Calu3 (cell line): ENCODE measurements at regions of chr17 and their contacts with region 1.

Region 1: GRCh38 chr17:64129764-64130558 is at the start of gene ERN1:
- DNase-seq: peak; percentile 88
- H3K4me3 Mint-ChIP-seq: peak within 1 kb of the TSS; percentile 82
- H3K27ac Mint-ChIP-seq: peak within 1 kb of the TSS; percentile 42
- H3K4me1 Mint-ChIP-seq: no peaks in the 10 kb centered on the region
- H3K27me3 Mint-ChIP-seq: no peaks in the 10 kb centered on the region
- CTCF ChIP-seq: no peak
- total RNA-seq, gene ERN1: 16.5 and 17.3 TPM in 2 replicates

Region 2: GRCh38 chr17:63919311-63919723 is 210.6 kb before region 1 on chr17:
- CTCF ChIA-PET with region 1: interaction called, 15 read pairs
- intact Hi-C with region 1: loop called (anchors 10 kb)
- DNase-seq: peak; percentile 58
- H3K4me3 Mint-ChIP-seq: no peak overlapping the region
- H3K27ac Mint-ChIP-seq: no peak overlapping the region
- H3K4me1 Mint-ChIP-seq: no peaks in the 10 kb centered on the region
- H3K27me3 Mint-ChIP-seq: peaks cover 72% of the 10 kb centered on the region
- CTCF ChIP-seq: peak; percentile 90

Region 3: GRCh38 chr17:64025732-64026294 is 104.1 kb before region 1 on chr17:
- CTCF ChIA-PET with region 1: interaction called, 78 read pairs
- intact Hi-C with region 1: loop called (anchors 1 kb)
- DNase-seq: peak; percentile 85
- H3K4me3 Mint-ChIP-seq: peak overlapping the region; percentile 74
- H3K27ac Mint-ChIP-seq: peak overlapping the region; percentile 19
- H3K4me1 Mint-ChIP-seq: peaks cover 8% of the 10 kb centered on the region
- H3K27me3 Mint-ChIP-seq: no peaks in the 10 kb centered on the region
- CTCF ChIP-seq: peak; percentile 92

Region 4: GRCh38 chr17:64056269-64057005 is 73.5 kb before region 1 on chr17:
- CTCF ChIA-PET with region 1: interaction called, 47 read pairs
- intact Hi-C with region 1: loop called (anchors 2 kb)
- DNase-seq: peak; percentile 65
- H3K4me3 Mint-ChIP-seq: peak overlapping the region; percentile 24
- H3K27ac Mint-ChIP-seq: peak overlapping the region; percentile 90
- H3K4me1 Mint-ChIP-seq: no peaks in the 10 kb centered on the region
- H3K27me3 Mint-ChIP-seq: no peaks in the 10 kb centered on the region
- CTCF ChIP-seq: peak; percentile 15

Region 5: DNA sequence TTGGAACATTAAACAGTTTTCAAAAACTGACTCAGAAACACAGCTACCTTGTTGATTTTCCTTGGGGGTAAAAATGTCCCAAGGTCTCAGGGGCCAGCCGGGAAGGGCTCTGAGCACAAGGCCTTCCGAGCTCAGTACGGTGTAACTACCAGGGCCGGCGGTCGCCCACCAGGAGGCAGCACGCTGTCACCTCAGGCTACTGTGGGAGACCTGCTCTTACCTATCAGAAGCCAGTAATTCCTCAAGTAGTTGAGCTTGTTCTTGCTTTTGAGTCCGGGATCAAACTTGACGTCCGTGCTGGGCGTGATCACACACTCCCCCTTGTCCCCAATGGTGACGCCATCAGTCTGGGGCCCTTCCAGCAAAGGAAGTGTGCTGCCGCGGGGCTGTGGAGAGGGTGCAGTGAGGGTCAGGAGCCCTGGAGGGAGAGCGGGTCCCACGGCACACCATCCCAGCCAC is 66.2 kb before region 1 on chr17:
- CTCF ChIA-PET with region 1: interaction called, 30 read pairs
- intact Hi-C with region 1: no loop called
- DNase-seq: peak; percentile 49
- H3K4me3 Mint-ChIP-seq: no peak overlapping the region
- H3K27ac Mint-ChIP-seq: no peak overlapping the region
- H3K4me1 Mint-ChIP-seq: no peaks in the 10 kb centered on the region
- H3K27me3 Mint-ChIP-seq: no peaks in the 10 kb centered on the region
- CTCF ChIP-seq: no peak